ENCODE measurements at regions of chr22 and their contacts with region 1.

Region 1: DNA sequence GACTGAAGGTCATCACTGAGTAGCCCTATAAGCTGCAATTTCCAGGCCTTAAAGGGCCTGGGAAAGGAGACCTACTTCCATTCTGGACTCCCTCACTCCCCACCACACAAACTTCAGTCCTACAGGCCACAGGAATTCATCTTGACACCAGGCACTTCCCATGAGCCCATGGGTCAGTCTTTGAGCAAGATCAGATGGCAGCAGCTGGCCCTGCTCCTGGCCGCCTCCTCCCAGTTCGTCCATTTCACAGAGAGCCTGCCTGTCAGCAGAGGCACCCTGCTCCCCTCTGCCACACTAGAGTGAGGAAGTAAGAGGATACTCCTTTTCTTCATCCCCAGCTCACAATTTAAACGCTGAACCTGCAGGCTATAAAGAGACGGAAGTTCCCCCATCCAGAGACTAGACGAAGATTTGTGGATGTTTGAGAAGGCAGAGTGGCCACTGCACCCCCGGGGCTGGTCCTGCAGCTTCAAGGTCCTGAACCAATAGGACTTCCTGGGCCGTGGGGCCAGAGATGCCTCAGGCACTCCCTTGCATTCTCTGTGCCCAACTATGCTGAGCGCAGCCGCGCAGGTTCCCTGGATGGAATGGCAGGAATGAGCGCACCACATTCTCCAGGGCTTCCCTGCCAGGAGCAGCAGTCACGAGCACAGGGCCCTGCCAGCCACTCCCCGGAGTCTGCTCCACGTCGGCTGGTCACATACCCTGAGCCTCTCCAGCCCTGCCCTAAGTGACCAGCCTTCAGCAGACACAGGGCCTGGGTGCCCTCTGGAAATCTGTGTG is 33.5 kb upstream of the BID start:
- ATAC-seq: no peak
- H3K4me3 ChIP-seq: no peak overlapping the region
- H3K27ac ChIP-seq: no peak overlapping the region
- H3K4me1 ChIP-seq: no peaks in the 10 kb centered on the region

Region 2: GRCh38 chr22:17665854-17666253 is 141.9 kb before region 1 on chr22:
- in situ Hi-C with region 1: no loop called
- ATAC-seq: no peak
- H3K4me3 ChIP-seq: no peak overlapping the region
- H3K27ac ChIP-seq: no peak overlapping the region
- H3K4me1 ChIP-seq: no peaks in the 10 kb centered on the region

Region 3: DNA sequence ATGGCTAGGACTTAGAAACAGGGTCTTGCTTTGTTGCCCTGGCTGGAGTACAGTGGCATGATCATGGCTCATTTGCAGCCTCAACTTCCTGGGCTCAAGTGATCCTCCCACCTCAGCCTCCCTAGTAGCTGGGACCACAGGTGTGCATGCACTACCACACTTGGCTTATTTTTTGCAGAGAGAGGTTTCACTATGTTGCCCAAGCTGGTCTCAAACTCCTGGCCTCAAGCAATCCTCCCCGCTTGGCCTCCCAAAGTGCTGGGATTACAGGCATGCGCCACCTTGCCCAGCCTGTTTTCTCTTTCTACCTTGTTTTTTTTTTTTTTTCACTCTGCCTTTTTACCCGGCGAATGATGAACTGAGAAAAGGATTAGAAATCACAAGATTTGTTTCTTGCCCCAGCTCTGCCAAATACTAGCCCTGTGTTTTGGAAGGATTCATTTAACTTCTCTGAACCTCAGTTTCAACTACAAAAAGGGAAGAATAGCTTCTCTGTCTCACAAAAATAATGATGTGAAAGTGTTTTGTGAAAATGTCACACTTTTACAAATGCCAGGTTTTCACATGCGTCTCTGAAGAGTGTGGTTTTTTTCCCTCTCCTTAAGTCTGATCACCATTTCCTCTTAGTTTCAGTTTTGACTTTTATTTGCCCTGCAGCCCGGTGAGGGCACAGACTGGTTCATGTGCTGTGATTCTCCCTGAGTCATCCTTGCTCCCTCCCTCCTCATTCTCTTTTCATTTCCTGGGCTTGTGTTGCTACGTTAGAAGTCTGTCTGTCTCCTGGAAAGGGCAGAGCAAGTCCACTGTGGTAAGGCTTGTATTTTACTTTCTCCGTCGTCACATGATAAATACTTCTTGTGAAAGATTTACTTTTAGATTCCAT is 101.5 kb before region 1 on chr22:
- in situ Hi-C with region 1: loop called in 1 of 9 experiments (anchors 25 kb)
- ATAC-seq: peak; percentile 74 to 100 (median 98)
- H3K4me3 ChIP-seq: peak overlapping the region in 1 of 5 donors; percentile 12
- H3K27ac ChIP-seq: no peak overlapping the region
- H3K4me1 ChIP-seq: peaks cover 0 to 3% of the 10 kb centered on the region in 2 donors

Region 4: DNA sequence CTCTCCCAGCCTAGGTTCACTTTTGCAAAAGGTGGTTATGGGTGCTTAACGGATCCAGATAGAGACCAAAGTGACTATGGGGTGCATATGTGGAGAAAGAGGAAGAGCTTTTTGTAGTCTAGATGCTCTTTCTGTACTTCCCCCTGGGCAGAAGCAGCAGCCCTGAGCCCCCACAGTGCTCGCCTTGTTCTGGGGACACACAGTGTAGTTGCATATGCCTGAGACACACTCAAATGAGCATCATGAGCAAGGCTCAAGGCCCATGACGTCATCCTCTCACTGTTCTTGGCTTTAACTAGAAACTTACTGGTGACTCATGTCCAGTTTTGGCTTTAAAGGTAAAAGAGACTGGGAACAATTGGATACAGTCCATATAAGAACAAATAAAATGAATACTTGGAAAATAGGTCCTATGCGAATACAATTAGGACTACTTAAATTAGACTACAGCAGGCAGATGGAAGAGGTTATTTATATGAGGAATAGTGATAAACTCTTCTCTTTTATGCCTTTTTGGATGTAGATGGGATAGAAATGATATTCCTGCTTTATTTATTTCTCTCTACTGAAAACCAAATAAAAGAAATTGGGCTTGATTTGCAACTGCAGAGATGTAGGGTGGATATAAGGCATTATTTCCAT is 249.9 kb after region 1 on chr22:
- in situ Hi-C with region 1: no loop called
- ATAC-seq: peak in 6 of 8 experiments; percentile 14 to 59 (median 37)
- H3K4me3 ChIP-seq: no peak overlapping the region
- H3K27ac ChIP-seq: no peak overlapping the region
- H3K4me1 ChIP-seq: peaks cover 5 to 21% of the 10 kb centered on the region in 2 donors